ENCODE measurements at regions of chr5 and their contacts with region 1.

Region 1: DNA sequence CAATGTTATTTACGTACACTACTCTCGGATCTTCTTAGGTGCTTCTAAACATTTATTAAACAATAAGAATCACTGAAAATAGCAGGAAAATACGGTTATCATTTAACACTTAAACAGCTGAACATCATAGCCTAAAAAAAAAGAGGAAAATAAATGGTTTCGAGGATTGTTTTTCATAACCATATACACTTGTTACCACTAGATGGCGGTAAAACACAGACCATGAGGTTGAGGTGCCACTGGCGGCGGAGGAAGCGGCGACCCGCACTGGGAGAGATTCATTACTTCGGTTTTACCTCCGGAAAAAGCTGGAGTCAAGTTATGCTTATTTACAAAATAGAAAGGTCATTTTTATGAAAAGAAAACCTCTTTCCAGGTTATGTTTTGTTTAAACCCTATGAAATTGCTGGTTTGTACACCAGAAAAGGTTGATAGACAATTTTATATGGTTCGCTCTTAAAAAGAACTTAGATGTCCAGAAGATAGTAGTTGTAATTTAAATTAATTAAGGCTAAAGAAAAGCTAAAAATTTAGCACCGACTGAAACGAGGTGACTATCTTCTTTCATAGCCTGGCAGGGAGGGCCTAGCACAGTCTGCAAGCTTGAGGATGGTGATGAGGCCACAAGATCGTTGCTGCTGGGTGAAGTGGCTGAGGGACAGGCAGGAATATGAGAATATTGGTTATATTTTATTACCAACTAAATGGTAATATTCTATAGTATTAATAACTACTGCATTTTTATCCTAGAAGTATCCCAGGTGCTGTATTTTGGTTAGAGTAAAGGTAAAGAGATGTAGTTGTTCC is 605.7 kb downstream of the RAB3C start:
- DNase-seq: peak; percentile 59 to 71 (median 70)
- H3K4me3 ChIP-seq: no peak overlapping the region
- H3K27ac ChIP-seq: no peak overlapping the region
- H3K4me1 ChIP-seq: no peaks in the 10 kb centered on the region
- H3K27me3 ChIP-seq: no peaks in the 10 kb centered on the region
- CTCF ChIP-seq: peak; percentile 66 to 77 (median 77)
- EP300 ChIP-seq: no peak
- POLR2A ChIP-seq: no peak

Region 2: GRCh38 chr5:59371525-59372127 is 183.0 kb after region 1 on chr5:
- intact Hi-C with region 1: loop called in 3 of 4 experiments (anchors 5 to 10 kb)
- DNase-seq: no peak
- H3K4me3 ChIP-seq: no peak overlapping the region
- H3K27ac ChIP-seq: no peak overlapping the region
- H3K4me1 ChIP-seq: no peaks in the 10 kb centered on the region
- H3K27me3 ChIP-seq: peaks cover 2% of the 10 kb centered on the region
- CTCF ChIP-seq: no peak
- EP300 ChIP-seq: no peak
- POLR2A ChIP-seq: no peak

Region 3: DNA sequence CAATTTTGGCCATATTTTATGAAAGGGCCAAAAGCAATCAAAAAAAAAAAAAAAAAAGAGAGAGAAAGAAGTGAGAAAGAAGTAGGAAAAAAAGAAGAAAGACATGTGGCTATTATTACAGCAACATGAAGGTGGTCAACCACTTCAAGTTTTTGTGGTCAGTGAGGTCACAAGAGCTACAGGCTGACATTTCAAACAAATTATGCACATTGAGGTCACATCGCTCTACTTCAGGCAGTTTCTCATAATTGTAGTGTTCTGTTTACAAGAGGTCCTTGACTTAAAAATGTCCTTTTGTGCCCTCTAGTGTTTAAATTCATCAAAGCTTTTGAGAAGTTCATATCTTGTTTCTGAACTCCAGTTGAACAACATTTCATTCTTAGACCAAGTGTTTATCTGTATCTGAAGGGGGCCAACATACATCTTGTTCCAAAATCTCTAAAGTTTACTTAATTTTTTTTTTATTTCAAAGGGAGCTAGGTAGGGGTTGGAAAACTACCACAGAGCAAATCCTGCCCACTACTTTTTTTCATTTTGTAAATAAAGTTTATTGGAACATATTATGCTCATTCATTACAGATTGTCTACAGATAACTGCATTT is 191.8 kb after region 1 on chr5:
- intact Hi-C with region 1: loop called in 2 of 4 experiments (anchors 5 to 10 kb)
- DNase-seq: no peak
- H3K4me3 ChIP-seq: no peak overlapping the region
- H3K27ac ChIP-seq: no peak overlapping the region
- H3K4me1 ChIP-seq: no peaks in the 10 kb centered on the region
- H3K27me3 ChIP-seq: no peaks in the 10 kb centered on the region
- CTCF ChIP-seq: peak in 1 of 3 donors; percentile 41
- EP300 ChIP-seq: no peak
- POLR2A ChIP-seq: no peak

Region 4: DNA sequence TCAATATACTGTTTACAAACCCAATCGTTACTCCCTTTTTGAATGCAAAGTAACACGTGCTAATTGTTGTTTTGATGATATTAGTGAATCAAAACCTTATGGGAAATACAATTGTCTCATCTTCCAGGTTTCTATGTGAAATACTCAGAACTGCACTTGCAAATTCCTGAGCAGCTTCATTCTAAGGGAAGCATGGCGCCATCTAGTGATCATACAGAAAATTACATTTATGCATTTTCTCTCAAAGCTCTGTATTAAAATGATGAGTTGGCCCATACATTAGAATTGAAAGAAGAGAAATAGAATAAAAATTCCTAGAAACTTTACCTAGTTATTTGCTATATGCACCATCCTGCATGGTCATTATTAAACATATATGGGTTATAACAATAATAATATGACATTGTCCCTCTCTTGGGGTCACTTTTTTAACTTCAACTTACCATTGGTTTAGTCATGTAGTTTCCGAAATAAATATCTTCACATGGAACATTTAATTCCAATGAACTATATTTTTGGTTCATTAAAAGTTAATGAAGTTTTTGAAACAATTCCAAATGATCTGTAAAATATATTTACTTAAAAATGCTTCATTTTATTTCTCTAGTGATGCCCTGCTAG is 484.9 kb after region 1 on chr5:
- intact Hi-C with region 1: loop called in 3 of 4 experiments (anchors 5 to 10 kb)
- DNase-seq: no peak
- H3K4me3 ChIP-seq: no peak overlapping the region
- H3K27ac ChIP-seq: no peak overlapping the region
- H3K4me1 ChIP-seq: no peaks in the 10 kb centered on the region
- H3K27me3 ChIP-seq: no peaks in the 10 kb centered on the region
- CTCF ChIP-seq: peak; percentile 36 to 64 (median 53)
- EP300 ChIP-seq: no peak
- POLR2A ChIP-seq: no peak

Measured in ovary (tissue), 10 donors.